Cardiac septum (tissue), 1 donor: ENCODE measurements at regions of chr4 and their contacts with region 1.

Region 1: GRCh38 chr4:139453371-139454110 is 380 bp upstream of the RAB33B start:
- DNase-seq: peak; percentile 99

Region 2: DNA sequence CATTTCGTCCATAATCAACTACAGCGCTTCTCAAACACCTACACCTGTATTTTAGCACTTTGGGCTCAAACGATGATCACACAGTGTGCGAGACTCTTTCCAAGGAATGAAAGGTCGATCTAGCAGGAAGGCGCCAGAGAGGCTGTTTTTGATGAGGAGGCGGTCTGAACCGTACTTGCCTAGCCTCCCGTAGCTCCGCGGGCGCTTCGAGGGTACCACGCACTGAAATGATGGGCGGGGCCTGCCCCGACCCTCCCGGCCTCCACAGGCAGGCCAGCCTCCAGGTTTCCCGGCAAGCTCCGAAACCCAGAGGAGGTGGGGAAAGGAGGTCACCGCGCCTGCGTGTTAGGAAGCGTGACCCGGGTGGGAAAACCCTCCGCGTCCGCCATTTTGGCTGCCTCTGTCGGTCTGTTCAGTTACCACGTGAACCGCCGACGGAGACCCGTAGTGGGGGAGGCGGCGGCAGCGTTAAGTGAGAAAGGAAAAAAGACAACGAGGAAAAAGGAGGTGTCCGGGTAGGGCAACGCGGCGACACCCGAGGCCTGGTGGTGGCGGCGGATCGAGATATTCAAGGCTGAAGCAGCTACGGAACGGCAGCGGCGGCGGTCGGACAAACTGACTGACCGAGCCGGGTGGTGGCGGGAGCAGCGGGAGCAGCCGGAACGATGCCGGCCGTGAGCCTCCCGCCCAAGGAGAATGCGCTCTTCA is 152.3 kb before region 1 on chr4 and contains the start of gene NAA15:
- intact Hi-C with region 1: loop called (anchors 5 kb)
- DNase-seq: peak; percentile 99
- total RNA-seq, gene NAA15: 37.9 TPM

Region 3: GRCh38 chr4:139416073-139416673 is 37.4 kb before region 1 on chr4:
- intact Hi-C with region 1: loop called (anchors 5 kb)
- DNase-seq: no peak

Region 4: DNA sequence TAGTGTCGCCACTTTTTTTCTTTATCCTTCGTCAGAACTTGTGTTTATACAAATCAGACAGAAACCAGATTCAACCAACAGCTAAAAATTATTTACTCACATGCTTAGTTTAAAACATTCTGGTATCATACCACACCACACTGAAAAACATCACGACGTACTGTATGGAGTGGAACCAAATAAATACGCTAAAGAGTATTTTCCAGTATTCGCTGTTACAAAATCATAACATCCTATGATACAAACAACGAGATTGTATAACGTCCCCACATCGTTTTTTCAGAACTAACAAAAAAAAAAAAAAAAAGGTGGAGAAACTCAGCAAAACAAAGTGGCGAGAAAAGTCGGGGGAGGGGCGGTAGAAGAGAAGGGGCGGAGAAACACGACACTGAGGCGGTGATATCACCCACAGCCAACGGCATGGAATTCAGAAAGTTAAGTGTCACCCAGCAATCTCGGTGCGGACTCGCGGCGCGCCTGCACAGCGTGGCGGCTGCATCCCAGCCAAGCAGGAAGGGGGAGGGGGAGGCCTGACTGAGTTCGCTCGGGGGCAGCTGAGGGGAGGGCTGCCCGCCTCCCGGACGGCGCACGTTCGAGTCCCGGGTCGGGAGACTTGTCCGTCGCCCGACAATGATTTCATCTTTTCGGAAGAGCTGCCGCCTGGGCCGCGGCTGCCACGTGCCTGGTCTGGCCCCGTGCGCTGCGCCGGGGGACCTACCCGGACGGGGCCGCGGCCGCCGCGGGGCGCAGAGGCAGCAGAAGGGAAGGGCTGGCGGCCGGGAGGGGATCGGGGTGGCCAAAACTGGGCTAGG is 101.6 kb after region 1 on chr4:
- intact Hi-C with region 1: loop called (anchors 5 kb)
- DNase-seq: peak; percentile 94

Region 5: GRCh38 chr4:139988863-139989733 is 535.6 kb after region 1 on chr4:
- intact Hi-C with region 1: no loop called
- DNase-seq: no peak

Region 6: DNA sequence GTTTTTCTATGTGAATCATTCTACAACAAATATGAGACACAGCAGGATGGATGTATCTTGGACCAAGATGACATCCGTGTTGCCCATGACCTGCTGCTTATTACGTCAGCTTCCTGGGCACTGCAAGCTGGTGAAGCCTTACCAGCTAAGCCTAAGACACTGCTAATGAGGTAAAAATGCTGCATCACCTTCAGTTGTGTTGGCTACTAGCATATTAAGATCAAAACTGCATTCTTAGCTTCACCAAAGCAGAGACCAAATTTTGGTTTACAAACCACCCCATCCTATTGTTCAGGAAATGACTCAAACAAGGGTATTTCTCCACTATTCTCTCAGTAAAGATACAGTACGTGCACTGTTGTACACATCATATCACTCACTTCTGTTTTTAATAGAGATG is 650.1 kb after region 1 on chr4:
- intact Hi-C with region 1: no loop called
- DNase-seq: no peak